ENCODE measurements at regions of chr19 and their contacts with region 1.

Region 1: GRCh38 chr19:42132851-42133528 is 744 bp upstream of the POU2F2 start:
- DNase-seq: no peak
- H3K4me3 ChIP-seq: peak overlapping the region; percentile 3 to 58 (median 28)
- H3K27ac ChIP-seq: peak overlapping the region in 3 of 4 donors; percentile 19 to 39 (median 33)
- H3K4me1 ChIP-seq: peaks cover 9 to 39% (median 27%) of the 10 kb centered on the region in 3 donors
- H3K27me3 ChIP-seq: peaks cover 6 to 59% (median 7%) of the 10 kb centered on the region in 4 donors
- CTCF ChIP-seq: peak; percentile 94 to 97 (median 96)
- POLR2A ChIP-seq: peak in 1 of 4 donors; percentile 36

Region 2: DNA sequence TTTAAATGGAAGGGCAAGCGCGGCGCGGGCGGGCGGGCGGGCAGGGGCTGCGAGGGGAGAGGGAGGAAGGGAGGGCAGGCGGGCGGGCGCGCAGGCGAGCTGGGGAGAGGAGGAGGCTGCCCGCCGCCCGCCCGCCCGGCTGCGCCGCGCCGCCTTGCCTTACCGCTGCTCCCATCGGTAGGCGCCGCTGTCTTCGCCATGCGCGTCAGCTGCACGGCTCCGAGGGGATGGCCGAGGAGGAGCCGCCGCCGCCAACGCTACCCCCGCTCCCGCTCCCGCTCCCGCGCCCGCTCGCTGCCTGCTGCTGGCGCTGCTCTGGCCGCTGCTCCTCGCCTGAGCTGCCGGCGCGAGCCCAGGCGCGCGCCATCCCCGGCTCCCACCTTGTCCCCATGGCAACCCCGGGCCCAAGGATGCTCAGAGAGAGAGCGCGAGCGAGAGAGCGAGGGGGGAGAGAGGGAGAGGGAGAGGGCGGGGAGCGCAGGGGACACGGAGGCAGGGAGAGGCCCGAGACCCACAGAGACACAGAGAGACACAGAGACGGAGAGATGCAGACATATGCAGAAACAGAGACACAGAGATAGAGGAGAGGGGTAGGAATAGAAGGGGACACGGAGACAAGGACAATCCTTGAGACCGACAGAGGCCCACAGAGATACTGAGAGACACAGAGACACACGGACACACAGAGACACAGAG is 44.1 kb after region 1 on chr19:
- intact Hi-C with region 1: loop called (anchors 5 kb)
- DNase-seq: no peak
- H3K4me3 ChIP-seq: peak overlapping the region; percentile 22 to 69 (median 46)
- H3K27ac ChIP-seq: peak overlapping the region in 1 of 4 donors; percentile 33
- H3K4me1 ChIP-seq: peaks cover 0 to 22% (median 8%) of the 10 kb centered on the region in 3 donors
- H3K27me3 ChIP-seq: peaks cover 15 to 100% (median 28%) of the 10 kb centered on the region in 4 donors
- CTCF ChIP-seq: peak in 3 of 6 experiments; percentile 22 to 45 (median 36)
- POLR2A ChIP-seq: no peak

Region 3: GRCh38 chr19:42189133-42189532 is 56.1 kb after region 1 on chr19:
- intact Hi-C with region 1: no loop called
- DNase-seq: no peak
- H3K4me3 ChIP-seq: no peak overlapping the region
- H3K27ac ChIP-seq: no peak overlapping the region
- H3K4me1 ChIP-seq: peaks cover 0 to 28% (median 9%) of the 10 kb centered on the region in 3 donors
- H3K27me3 ChIP-seq: no peaks in the 10 kb centered on the region
- CTCF ChIP-seq: no peak
- POLR2A ChIP-seq: no peak

Region 4: DNA sequence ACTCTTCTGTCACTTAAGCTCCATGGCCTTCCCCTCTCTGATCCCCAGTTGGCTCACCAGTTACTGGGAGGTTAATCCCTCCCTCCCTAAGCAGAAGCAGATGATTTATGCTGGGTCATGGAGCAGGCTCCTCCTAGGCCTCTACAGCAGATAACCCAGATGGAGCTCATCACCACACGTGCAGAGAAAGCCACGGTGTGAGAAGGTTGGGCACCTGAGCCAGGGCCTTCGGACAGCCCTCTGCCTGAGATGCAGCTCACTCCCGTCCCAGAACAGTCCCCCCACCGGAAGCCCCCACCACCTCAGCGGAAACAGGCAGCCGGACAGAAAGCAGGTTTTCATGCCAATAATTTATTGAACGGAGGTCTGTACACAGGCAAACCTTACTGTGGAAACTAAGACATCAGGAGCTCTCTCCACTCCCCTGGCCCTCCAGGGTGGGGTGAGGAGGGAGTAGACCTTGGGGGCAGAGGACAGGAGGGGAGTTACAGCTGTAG is 96.9 kb after region 1 on chr19:
- intact Hi-C with region 1: loop called (anchors 10 kb)
- DNase-seq: no peak
- H3K4me3 ChIP-seq: no peak overlapping the region
- H3K27ac ChIP-seq: peak overlapping the region in 2 of 4 donors; percentile 9 to 21
- H3K4me1 ChIP-seq: peaks cover 0 to 18% (median 0%) of the 10 kb centered on the region in 3 donors
- H3K27me3 ChIP-seq: no peaks in the 10 kb centered on the region
- CTCF ChIP-seq: no peak
- POLR2A ChIP-seq: no peak

Region 5: DNA sequence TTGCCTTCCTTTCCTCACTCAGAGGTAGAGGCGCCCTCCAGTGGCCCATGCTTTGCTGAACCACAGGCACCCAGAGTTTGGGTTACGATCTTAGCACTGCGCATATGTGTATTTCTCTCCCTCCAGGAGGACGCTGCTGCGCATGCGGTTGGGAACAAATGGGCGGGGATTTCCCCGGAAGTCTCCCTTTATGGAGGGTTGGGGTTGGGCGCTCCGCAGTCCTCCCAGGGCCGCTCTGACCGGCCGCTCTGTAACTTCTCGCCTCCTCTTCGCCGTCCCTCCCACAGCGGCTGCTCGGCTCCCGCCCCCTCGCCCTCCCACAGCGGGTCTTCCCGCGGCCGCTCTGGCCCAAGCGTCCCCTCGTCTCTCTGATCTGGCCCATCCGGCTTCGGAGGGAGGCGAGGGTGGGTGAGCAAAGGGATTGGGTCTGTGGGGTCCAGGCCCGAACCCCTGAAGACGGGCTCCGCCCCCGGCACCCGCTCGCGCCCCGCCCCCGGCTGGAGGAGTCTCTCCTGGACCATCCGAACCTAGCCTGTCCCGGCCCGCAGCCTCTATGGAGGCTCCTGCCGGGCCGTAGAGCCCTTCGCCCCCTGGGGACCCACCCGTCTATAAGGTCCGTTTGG is 192.4 kb after region 1 on chr19 and contains the start of gene MEGF8:
- intact Hi-C with region 1: loop called (anchors 10 kb)
- DNase-seq: peak; percentile 85
- H3K4me3 ChIP-seq: peak within 1 kb of the TSS; percentile 61 to 89 (median 80)
- H3K27ac ChIP-seq: peak within 1 kb of the TSS; percentile 83 to 92 (median 88)
- H3K4me1 ChIP-seq: peaks cover 26 to 47% (median 31%) of the 10 kb centered on the region in 3 donors
- H3K27me3 ChIP-seq: peaks cover 9 to 32% (median 11%) of the 10 kb centered on the region in 4 donors
- CTCF ChIP-seq: peak; percentile 78 to 93 (median 90)
- POLR2A ChIP-seq: peak in 3 of 4 donors; percentile 41 to 53 (median 44)
- total RNA-seq, gene MEGF8: 6.4 to 11.1 (median 10.3) TPM

Measured in esophagus squamous epithelium (tissue), 5 donors.